CD4-positive, alpha-beta T cell (primary cell): ENCODE measurements at regions of chr7 and their contacts with region 1.

Region 1: DNA sequence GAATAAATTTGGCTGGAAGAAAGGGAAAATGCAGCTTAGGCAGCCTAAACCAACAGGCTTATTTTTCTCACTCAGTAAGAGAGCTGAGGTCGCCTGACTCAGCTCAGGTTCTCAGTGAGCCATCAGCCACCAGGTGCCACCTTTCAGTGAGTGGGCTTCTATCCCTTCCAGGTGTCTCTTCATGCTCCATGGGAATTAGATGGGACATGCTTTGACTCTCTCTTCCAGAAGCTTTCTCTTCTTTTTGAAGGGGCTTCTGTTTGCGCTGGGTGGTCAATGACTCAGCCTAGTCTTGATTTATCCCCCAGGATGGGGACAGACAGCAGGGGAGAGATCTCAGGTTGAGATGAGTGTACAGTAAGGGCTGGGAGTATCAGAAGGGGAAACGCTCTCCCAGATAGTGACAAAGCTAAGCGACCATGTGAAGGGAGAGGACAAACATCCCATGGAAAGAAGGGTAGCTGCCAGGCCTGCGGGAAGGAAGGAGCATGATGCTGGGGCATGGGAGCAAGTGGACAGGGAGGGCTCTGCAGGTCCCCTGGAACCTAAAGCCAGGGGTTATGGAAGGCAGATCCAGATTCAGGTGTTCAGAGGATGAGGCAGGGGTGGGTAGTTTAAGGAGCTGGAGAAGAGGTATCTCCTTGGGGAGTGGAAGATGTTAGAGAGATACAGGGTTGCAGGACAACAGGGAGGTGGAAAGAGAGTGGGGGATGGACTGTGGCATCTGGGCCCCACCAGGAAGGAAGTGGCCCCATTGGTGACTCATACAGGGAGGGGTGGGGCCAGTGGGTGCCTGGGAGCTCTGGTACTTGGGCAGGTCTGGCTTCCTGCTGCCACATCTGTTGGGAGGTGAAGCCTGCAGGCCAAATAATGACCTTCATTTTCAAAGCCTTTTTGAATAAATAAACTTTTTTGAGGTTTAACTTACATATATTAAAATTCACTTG is 32.5 kb downstream of the OGDH start:
- DNase-seq: peak; percentile 58 to 93 (median 78)
- ATAC-seq: peak; percentile 55
- H3K4me3 ChIP-seq: peak overlapping the region; percentile 21
- H3K4me3 Mint-ChIP-seq: peak overlapping the region; percentile 89
- H3K27ac ChIP-seq: peak overlapping the region; percentile 90 to 95
- H3K27ac Mint-ChIP-seq: peak overlapping the region; percentile 96
- H3K4me1 ChIP-seq: peaks cover 86% of the 10 kb centered on the region
- H3K4me1 Mint-ChIP-seq: peaks cover 72% of the 10 kb centered on the region
- H3K27me3 ChIP-seq: no peaks in the 10 kb centered on the region
- H3K27me3 Mint-ChIP-seq: no peaks in the 10 kb centered on the region
- CTCF ChIP-seq: no peak

Region 2: GRCh38 chr7:44622307-44623151 is 16.4 kb before region 1 on chr7:
- CTCF ChIA-PET with region 1: interaction called, 7 read pairs
- POLR2A ChIA-PET with region 1: interaction called, 40 read pairs
- intact Hi-C with region 1: no loop called
- DNase-seq: peak in 6 of 14 experiments; percentile 22 to 66 (median 58)
- ATAC-seq: peak; percentile 67
- H3K4me3 ChIP-seq: peak overlapping the region; percentile 23
- H3K4me3 Mint-ChIP-seq: peak overlapping the region; percentile 13
- H3K27ac ChIP-seq: peak overlapping the region in 1 of 2 donors; percentile 85
- H3K27ac Mint-ChIP-seq: peak overlapping the region; percentile 84
- H3K4me1 ChIP-seq: peaks cover 84% of the 10 kb centered on the region
- H3K4me1 Mint-ChIP-seq: peaks cover 87% of the 10 kb centered on the region
- H3K27me3 ChIP-seq: no peaks in the 10 kb centered on the region
- H3K27me3 Mint-ChIP-seq: no peaks in the 10 kb centered on the region
- CTCF ChIP-seq: no peak

Region 3: DNA sequence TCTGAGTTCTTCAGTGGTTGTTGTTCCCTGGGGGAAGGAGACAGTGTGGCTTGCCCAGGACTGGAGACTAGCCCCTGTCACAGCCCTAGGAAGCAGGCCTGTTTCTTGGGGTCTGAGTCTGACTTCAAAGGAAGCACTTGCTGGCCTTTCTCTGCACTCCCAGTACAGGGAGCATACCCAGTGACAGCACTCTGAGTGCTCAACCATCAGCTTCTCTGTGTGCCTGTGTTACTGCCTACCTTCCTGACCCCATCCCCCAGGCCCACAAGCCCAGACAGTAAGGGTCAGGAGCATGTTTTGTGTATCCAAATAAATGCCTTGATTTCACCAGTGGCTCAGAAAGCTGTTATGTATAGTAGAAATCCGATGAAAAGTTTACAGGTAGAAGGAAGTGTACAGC is 16.5 kb after region 1 on chr7:
- CTCF ChIA-PET with region 1: interaction called, 3 read pairs
- POLR2A ChIA-PET with region 1: interaction called, 12 read pairs
- intact Hi-C with region 1: no loop called
- DNase-seq: no peak
- ATAC-seq: no peak
- H3K4me3 ChIP-seq: no peak overlapping the region
- H3K4me3 Mint-ChIP-seq: no peak overlapping the region
- H3K27ac ChIP-seq: no peak overlapping the region
- H3K27ac Mint-ChIP-seq: no peak overlapping the region
- H3K4me1 ChIP-seq: peaks cover 4% of the 10 kb centered on the region
- H3K4me1 Mint-ChIP-seq: peaks cover 5% of the 10 kb centered on the region
- H3K27me3 ChIP-seq: no peaks in the 10 kb centered on the region
- H3K27me3 Mint-ChIP-seq: no peaks in the 10 kb centered on the region
- CTCF ChIP-seq: no peak